HEK293T (cell line): ENCODE measurements at regions of chr17 and their contacts with region 1.

Region 1: DNA sequence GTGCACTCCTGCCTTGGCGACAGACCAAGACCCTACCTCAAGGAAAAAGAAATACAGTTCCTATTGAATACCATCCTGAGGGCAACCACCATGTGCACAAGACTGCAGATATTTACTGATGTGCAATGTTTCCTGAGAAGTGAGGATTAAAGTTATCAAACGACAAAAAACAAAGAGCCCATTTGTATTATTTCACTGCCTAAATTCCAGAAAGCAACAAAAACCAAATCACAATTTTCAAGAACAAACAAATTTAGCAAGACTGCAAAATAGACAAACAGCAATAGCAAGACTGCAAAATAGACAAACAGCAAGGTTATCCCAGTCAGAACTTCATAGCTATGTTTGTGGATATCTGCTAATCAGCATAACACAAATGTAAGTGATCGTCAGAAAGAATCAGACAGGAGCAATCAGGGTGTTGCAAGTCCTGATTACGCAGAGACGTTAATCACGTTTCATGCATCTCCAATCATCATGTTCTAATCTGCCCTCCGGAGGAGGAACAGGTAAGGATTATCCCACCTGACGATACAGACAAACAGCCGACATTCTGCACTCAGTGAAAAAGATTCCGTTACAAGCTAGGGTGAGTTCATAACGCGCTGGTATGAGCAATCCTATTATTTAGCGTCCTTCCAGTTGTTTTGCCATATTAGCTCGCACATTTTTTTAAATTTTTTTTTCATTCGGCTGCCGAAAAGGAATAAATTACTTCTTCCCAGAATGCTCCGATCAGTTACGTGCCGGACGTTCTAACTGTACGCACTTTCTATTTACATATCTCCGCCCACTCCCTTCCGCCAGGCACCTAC is 2.9 kb downstream of the TMEM107 start:
- DNase-seq: peak; percentile 79

Region 2: DNA sequence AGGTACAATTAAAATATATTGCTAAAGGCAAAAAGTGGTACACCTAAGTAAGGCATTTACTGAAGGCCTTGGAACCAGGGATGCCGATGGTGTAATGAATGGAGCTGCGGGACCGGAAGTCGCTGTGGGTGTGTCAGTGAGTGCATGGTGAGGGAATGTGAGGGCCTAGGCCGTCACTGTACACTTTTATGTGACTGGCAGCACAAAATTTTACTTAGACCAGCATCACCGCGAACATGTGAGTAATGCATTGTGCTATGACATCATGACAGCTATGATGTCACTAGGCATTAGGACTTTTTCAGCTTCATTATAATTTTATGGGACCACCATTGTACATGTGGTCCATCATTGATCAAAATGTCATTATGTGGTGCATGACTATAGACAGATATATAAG is 119.7 kb before region 1 on chr17:
- CTCF ChIA-PET with region 1: no interaction called
- POLR2A ChIA-PET with region 1: no interaction called
- DNase-seq: no peak

Region 3: GRCh38 chr17:8118769-8119580 is 54.3 kb before region 1 on chr17:
- CTCF ChIA-PET with region 1: interaction called, 5 read pairs
- POLR2A ChIA-PET with region 1: interaction called, 22 read pairs
- DNase-seq: peak; percentile 81

Region 4: DNA sequence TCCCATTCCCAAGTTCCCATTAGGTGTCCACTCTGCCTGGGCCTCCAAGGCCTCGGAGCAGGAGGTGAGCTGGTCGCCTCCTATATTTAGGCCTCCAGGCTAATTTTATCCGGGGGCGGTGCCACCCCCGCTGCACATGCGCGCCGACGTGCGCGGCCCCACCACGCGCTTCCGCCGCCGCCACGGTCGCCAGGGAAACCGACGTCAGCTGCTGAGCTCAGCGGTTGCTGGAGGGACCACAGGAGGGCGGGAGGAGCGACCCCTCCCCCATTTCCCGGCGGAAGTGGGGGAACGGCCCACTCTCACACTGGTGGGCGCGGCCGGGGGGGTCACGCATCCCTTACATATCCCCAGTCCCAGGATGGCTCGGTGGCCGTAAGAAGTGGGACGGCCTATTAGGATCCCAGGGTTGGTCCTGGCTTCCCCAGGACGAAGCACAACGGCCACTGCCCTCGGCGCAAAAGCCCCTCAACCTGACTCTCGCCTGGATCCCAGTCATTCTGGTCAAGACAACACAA is 22.1 kb before region 1 on chr17:
- CTCF ChIA-PET with region 1: no interaction called
- POLR2A ChIA-PET with region 1: interaction called, 27 read pairs
- DNase-seq: peak; percentile 67

Region 5: DNA sequence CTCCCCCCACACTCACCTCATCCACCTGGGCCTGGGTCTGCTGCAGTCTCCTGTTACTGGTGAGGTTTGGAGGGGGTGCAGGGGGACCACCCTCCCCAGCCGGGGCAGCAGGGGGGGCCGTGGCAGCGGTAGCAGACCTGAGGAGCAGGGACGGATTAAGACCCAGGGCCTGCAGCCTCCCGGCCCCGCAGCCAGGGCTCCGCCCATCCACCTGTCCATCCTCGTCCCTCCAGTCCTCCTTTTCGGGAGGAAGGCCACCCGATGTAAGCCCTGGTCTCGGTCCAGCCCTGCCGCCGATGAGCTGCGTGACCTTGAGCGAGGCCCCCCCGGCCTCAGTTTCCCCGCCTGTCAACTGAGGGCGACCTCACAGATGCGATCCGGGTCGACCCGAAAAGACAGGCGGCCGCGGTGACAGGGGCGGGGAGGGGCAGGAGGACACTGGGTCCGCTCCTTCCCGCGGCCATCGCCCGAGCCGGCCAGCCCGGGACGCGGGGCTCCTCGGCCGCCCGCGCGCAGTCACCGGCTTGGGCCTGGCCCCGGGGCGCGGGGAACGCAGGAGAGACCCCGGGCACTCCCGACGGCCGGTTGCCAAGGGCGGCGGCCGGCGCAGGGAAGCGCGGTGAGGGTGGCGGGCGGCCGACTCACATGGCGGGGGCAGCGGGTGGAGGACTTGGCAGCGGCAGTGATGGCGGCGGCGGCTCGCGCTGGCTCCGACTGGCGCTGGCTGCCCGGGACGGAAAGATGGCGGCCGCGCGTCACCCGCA is 10.8 kb before region 1 on chr17 and contains the start of gene VAMP2:
- CTCF ChIA-PET with region 1: interaction called, 3 read pairs
- POLR2A ChIA-PET with region 1: interaction called, 31 read pairs
- DNase-seq: no peak

Region 6: DNA sequence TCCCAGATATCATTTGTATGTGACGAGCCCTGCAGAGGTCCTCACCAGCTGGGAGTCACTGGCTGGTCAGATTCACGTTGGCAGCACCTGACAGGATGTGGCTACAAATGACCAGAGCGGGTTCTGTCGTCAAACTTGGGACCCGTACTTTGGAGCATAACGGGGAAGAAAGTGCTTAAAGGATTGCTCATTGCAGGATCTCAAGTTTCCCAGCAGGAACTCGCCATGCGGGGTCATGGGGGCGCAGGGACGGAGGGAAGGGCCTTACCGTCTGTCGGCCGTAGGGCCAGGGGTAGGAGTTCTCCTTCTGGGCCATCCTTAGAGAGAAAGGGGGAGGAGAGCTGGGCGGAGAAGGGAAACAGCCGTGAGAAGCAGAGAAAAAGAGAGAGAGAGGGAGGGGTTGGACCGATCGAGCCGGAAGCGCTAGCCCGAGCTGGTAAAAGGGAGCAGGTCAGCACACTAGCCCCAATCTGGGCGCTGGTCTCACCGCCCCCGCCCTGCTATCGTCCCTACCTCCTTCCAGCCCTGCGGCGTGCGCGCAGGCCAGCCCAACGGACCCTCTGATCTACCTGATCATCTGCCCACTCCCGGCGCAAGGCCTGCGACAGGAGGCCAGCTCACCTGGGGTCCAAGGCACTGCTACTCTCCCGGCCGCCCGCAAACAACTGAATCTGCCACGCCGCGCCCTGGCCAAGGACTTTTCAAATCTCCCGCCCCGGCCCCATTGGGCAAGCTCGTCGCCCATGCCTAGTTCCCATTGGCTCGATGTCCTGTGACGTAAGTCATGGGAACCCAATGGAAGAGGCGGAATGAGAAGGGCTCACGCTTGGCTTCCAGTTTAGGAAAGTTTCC is 36.9 kb after region 1 on chr17 and contains the start of gene AURKB:
- CTCF ChIA-PET with region 1: no interaction called
- POLR2A ChIA-PET with region 1: interaction called, 24 read pairs
- DNase-seq: peak; percentile 92

Region 7: GRCh38 chr17:8248751-8249607 is 75.7 kb after region 1 on chr17 and contains the start of gene PFAS:
- CTCF ChIA-PET with region 1: no interaction called
- POLR2A ChIA-PET with region 1: interaction called, 14 read pairs
- DNase-seq: peak; percentile 94